Activated naive CD4-positive, alpha-beta T cell treated with anti-CD3 and anti-CD28 coated beads, Interleukin-2, amount 10 ng/mL, durations not matched to agents 7 days and 5 days (primary cell): ENCODE measurements at regions of chr15 and their contacts with region 1.

Region 1: DNA sequence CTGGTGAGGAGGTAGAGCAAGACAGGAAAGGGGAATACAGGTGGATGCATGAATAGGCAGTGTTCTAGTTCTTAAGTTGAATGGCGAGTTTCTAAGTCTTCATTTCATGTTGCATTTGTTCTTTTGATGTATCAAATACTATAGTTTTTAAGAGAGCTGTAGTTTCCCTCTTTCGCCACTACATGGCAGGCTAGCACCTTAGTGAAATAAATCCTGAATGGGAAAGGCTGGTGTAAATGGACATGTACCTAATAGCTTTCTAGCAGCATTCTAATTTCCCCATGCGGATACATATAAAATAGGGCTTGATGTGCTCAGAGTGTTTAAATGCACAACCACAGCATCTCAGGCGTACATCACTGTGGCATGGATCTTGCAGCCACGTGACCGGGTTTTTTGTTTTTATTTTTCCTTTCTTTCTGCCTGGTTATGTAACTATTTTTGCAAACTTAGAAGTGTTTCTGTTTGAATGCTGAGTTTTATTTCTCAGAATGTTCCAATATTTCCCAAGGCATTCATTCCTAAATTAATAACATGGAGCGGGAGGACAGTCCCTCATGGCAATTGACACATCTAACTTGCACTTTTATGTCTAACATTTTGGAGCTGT is 23.5 kb upstream of the CLN6 start:
- DNase-seq: peak; percentile 57
- H3K4me3 Mint-ChIP-seq: no peak overlapping the region
- H3K27ac Mint-ChIP-seq: no peak overlapping the region
- H3K4me1 Mint-ChIP-seq: peaks cover 2% of the 10 kb centered on the region
- H3K27me3 Mint-ChIP-seq: peaks cover 49% of the 10 kb centered on the region

Region 2: DNA sequence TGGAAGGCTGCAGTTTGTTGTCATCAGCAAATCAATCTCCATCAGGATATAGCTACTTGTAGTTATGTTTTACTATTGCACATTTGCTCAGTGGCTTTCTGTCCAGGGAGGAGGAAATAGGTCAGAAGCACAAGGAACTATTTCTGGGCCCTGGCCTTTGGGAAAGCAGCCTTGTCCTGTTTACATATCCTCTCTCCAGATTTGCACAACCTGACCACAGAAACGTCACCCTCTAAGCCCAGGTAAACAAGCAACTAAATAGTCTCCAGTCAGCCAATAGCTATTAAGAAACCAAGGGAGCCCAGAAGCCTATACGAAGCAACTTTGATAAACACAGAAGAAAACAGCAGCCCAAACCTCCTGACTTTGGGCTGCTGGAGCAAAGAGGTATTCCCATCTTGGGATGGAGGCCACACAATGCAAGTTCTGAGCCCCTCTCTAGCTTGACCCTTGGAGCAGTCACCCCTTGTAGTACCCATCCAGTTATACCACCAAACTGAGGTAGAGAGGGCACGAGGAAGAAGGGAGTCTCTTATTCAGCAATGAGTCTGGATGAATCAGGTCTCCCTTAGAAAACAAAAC is 22.2 kb after region 1 on chr15:
- CTCF ChIA-PET with region 1: interaction called, 15 read pairs
- DNase-seq: no peak
- H3K4me3 Mint-ChIP-seq: peak overlapping the region; percentile 17
- H3K27ac Mint-ChIP-seq: no peak overlapping the region
- H3K4me1 Mint-ChIP-seq: peaks cover 31% of the 10 kb centered on the region
- H3K27me3 Mint-ChIP-seq: peaks cover 14% of the 10 kb centered on the region

Region 3: DNA sequence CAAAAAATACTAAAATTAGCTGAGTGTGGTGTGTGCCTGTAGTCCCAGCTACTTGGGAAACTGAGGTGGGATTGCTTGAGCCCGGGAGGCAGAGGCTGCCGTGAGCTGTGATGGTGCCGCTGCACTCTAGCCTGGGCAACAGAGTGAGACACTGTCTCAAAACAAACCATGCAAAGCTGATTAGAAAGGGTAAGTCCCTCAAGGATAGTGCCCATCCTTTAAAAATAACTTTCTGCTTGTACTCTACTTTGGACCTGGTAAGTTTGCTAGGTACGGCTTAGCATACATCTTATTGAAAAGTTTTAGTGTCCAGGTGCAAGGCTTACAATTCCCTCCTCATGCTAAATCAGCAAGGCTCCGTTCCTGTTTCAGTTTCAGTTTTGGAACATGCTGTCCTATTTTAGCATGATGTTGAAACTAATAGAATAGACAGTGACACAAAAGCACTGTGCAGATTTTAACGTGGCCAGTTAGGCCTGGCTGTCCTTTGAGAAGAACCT is 45.9 kb after region 1 on chr15:
- CTCF ChIA-PET with region 1: interaction called, 15 read pairs
- DNase-seq: peak; percentile 37
- H3K4me3 Mint-ChIP-seq: peak overlapping the region; percentile 72
- H3K27ac Mint-ChIP-seq: peak overlapping the region; percentile 91
- H3K4me1 Mint-ChIP-seq: peaks cover 30% of the 10 kb centered on the region
- H3K27me3 Mint-ChIP-seq: no peaks in the 10 kb centered on the region